ENCODE measurements at regions of chr12 and their contacts with region 1.

Region 1: GRCh38 chr12:68807576-68808387 is at the start of gene MDM2:
- DNase-seq: peak; percentile 94
- ATAC-seq: peak; percentile 87
- H3K4me3 Mint-ChIP-seq: peak within 1 kb of the TSS; percentile 92
- H3K27ac Mint-ChIP-seq: peak within 1 kb of the TSS; percentile 98
- H3K4me1 Mint-ChIP-seq: peaks cover 18% of the 10 kb centered on the region
- H3K27me3 Mint-ChIP-seq: no peaks in the 10 kb centered on the region
- CTCF ChIP-seq: no peak
- total RNA-seq, gene MDM2: 69.8 and 90.8 TPM in 2 replicates

Region 2: GRCh38 chr12:68331869-68332727 is 475.7 kb before region 1 on chr12 and contains the start of gene MDM1:
- CTCF ChIA-PET with region 1: no interaction called
- POLR2A ChIA-PET with region 1: interaction called, 8 read pairs
- intact Hi-C with region 1: loop called (anchors 1 kb)
- DNase-seq: peak; percentile 92
- ATAC-seq: peak; percentile 97
- H3K4me3 Mint-ChIP-seq: peak within 1 kb of the TSS; percentile 89
- H3K27ac Mint-ChIP-seq: peak within 1 kb of the TSS; percentile 87
- H3K4me1 Mint-ChIP-seq: peaks cover 27% of the 10 kb centered on the region
- H3K27me3 Mint-ChIP-seq: no peaks in the 10 kb centered on the region
- CTCF ChIP-seq: no peak
- total RNA-seq, gene MDM1: 24.5 and 25.9 TPM in 2 replicates

Region 3: GRCh38 chr12:68610370-68611093 is 197.2 kb before region 1 on chr12 and contains the start of gene RAP1B:
- CTCF ChIA-PET with region 1: no interaction called
- POLR2A ChIA-PET with region 1: interaction called, 22 read pairs
- intact Hi-C with region 1: loop called (anchors 1 kb)
- DNase-seq: peak; percentile 82
- ATAC-seq: peak; percentile 82
- H3K4me3 Mint-ChIP-seq: peak within 1 kb of the TSS; percentile 95
- H3K27ac Mint-ChIP-seq: peak within 1 kb of the TSS; percentile 99
- H3K4me1 Mint-ChIP-seq: peaks cover 48% of the 10 kb centered on the region
- H3K27me3 Mint-ChIP-seq: no peaks in the 10 kb centered on the region
- CTCF ChIP-seq: no peak
- total RNA-seq, gene RAP1B: 136 and 142 TPM in 2 replicates

Region 4: GRCh38 chr12:68786929-68787328 is 20.9 kb before region 1 on chr12:
- CTCF ChIA-PET with region 1: no interaction called
- POLR2A ChIA-PET with region 1: interaction called, 13 read pairs
- intact Hi-C with region 1: no loop called
- DNase-seq: no peak
- ATAC-seq: no peak
- H3K4me3 Mint-ChIP-seq: no peak overlapping the region
- H3K27ac Mint-ChIP-seq: no peak overlapping the region
- H3K4me1 Mint-ChIP-seq: peaks cover 16% of the 10 kb centered on the region
- H3K27me3 Mint-ChIP-seq: no peaks in the 10 kb centered on the region
- CTCF ChIP-seq: no peak

Region 5: DNA sequence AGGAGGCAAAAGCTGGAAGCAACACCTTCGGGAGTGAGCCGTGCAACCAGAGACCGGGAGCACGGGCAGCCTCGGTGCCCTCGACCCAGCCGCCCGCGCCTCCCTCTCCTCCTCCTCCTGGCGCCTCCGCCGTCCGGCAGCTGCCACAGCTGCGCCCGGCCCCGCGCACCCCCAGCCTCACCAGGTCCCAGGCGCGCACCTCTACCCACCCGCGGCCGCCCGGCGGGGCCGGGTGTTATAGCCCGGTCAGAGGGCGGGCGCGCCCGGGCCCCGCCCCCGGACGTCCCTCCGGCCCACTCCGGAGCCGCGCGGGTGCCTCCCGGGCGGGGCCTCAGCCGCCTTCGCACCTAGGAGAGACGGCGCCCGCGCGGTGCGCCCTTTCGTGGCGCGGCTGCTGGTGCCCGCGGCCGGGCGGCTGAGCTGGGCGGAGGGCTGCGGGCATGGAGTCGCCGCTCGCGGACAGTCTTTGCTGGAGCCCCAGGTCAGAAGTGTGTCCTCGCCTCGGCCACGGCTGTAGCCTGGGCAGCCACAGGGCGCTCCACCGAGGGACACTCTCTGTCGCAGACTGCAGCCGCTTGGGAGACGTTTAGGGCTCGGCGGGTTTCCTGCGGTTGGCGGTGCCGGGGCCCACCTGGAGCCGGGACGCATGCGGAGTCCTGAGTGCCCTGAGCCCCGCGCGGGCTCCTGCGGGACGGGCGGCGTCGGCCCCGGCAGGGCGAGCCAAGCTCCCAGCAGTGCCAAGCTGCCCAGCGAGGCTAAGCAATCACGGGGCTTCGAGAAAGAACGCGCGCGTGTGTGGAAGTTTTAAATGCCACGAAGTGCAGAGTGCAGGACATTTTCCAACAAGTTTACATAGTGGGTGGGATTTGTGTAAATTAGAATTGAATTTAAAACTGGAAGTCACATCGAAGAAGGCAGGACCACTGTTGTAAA is 125.4 kb after region 1 on chr12 and contains the start of gene CPM:
- CTCF ChIA-PET with region 1: no interaction called
- POLR2A ChIA-PET with region 1: interaction called, 5 read pairs
- intact Hi-C with region 1: loop called (anchors 5 kb)
- DNase-seq: peak; percentile 78
- ATAC-seq: peak; percentile 97
- H3K4me3 Mint-ChIP-seq: peak within 1 kb of the TSS; percentile 83
- H3K27ac Mint-ChIP-seq: peak within 1 kb of the TSS; percentile 28
- H3K4me1 Mint-ChIP-seq: peaks cover 9% of the 10 kb centered on the region
- H3K27me3 Mint-ChIP-seq: no peaks in the 10 kb centered on the region
- CTCF ChIP-seq: no peak
- total RNA-seq, gene CPM: 6.3 and 10.1 TPM in 2 replicates

Region 6: DNA sequence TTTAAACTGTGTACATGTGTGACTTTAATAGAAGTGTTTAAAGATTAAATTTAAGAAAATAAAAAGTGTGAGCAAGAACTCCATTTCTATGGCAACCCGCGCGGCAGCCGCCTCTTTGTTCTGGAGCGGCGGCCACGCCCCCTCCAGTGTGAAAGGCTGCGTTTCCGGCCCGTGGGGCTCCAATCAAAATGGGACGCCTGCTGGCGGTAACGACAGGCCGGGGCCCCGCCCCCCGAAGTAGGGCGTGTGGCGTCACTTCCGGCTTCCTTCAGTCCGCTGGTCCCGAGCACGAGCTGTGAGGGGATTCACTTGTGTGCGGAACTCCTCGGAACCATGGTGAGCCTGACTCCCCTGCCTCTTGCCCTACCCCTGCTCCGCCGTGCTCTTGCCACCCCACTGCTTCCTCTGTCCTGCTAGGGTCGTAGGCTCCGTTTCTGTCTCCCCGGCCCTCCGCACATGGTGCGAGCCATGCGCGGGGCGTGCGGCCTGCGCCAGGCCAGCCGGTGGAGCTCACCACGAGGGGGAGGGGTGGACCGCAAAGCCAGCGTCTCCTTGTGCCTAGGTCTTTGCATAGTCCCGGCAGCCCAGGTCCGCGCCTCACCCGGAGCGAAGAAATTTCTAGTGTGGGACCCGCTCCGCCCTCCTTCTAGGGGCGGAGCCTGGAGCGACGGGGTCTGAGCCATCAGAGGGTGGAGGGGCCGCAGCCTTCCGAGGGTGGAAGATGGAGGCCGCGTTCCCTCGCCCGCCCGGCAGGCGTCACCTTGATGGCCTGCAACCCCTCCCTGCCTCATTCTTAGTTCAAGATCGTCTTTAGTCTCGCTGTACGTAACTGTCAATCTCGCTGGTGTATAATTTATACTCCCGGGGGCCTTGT is 777.6 kb after region 1 on chr12 and contains the start of gene CCT2:
- CTCF ChIA-PET with region 1: no interaction called
- POLR2A ChIA-PET with region 1: no interaction called
- intact Hi-C with region 1: loop called (anchors 1 kb)
- DNase-seq: peak; percentile 91
- ATAC-seq: peak; percentile 90
- H3K4me3 Mint-ChIP-seq: peak within 1 kb of the TSS; percentile 96
- H3K27ac Mint-ChIP-seq: peak within 1 kb of the TSS; percentile 95
- H3K4me1 Mint-ChIP-seq: peaks cover 8% of the 10 kb centered on the region
- H3K27me3 Mint-ChIP-seq: no peaks in the 10 kb centered on the region
- CTCF ChIP-seq: no peak
- total RNA-seq, gene CCT2: 205 and 211 TPM in 2 replicates